Activated CD8-positive, alpha-beta T cell treated with anti-CD3 and anti-CD28 coated beads, Interleukin-2, amount 10 ng/mL, durations not matched to agents 7 days and 5 days (primary cell): ENCODE measurements at regions of chr6 and their contacts with region 1.

Region 1: DNA sequence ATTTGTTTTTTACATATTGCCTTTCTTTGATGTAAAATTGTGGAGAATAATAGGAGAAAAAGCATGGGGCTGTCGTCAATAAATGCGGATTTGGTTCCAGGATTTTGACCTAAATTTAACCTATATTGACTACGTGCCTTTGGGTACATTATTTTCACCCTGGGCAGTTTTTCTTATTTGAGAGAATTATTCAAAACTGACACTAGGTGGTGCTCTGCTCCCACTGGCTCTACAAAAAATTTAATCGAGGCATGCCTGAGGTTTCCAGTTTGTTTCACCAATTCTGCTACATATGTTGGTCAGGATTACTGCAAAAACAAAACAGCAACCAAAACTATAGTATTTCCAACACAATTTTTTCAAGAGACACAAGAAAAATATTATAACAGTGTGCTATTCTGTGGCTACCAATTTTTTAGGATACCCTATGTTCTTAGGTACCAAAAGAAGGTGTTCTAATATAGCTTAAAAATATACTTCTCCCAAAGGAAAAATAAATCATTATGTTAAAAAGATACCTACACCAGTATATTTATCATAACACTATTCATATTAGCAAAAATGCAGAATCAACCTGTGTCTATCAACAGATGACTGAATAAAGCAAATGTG is 48.6 kb upstream of the FABP7 start:
- DNase-seq: peak; percentile 35
- ATAC-seq: no peak
- H3K4me3 Mint-ChIP-seq: no peak overlapping the region
- H3K27ac Mint-ChIP-seq: no peak overlapping the region
- H3K4me1 Mint-ChIP-seq: no peaks in the 10 kb centered on the region
- H3K27me3 Mint-ChIP-seq: peaks cover 18% of the 10 kb centered on the region

Region 2: DNA sequence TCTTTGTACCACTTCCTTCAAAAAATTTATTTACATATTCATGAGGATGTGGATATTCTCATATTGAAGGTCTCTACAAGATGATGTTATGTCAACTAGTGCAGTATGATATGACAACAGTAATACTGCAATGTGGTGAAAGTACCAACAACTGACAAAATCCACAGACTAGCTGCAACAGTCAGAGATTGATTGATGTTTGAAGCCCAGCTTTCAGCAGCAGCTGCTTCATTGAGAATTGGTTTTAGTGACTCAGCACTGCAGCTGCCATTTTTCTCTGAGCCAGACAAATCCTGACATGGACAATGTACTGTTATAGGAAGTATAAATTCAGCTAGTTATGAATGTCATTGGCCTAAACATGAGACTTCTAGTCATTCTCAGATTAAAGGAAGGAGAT is 66.9 kb before region 1 on chr6:
- CTCF ChIA-PET with region 1: no interaction called
- POLR2A ChIA-PET with region 1: no interaction called
- DNase-seq: no peak
- ATAC-seq: no peak
- H3K4me3 Mint-ChIP-seq: no peak overlapping the region
- H3K27ac Mint-ChIP-seq: no peak overlapping the region
- H3K4me1 Mint-ChIP-seq: no peaks in the 10 kb centered on the region
- H3K27me3 Mint-ChIP-seq: peaks cover 2% of the 10 kb centered on the region

Region 3: GRCh38 chr6:122692131-122692598 is 38.7 kb before region 1 on chr6:
- CTCF ChIA-PET with region 1: no interaction called
- POLR2A ChIA-PET with region 1: no interaction called
- DNase-seq: no peak
- ATAC-seq: no peak
- H3K4me3 Mint-ChIP-seq: no peak overlapping the region
- H3K27ac Mint-ChIP-seq: no peak overlapping the region
- H3K4me1 Mint-ChIP-seq: no peaks in the 10 kb centered on the region
- H3K27me3 Mint-ChIP-seq: no peaks in the 10 kb centered on the region

Region 4: GRCh38 chr6:122751326-122751725 is 20.4 kb after region 1 on chr6:
- CTCF ChIA-PET with region 1: interaction called, 14 read pairs
- POLR2A ChIA-PET with region 1: no interaction called
- DNase-seq: no peak
- ATAC-seq: peak; percentile 86
- H3K4me3 Mint-ChIP-seq: no peak overlapping the region
- H3K27ac Mint-ChIP-seq: peak overlapping the region; percentile 70
- H3K4me1 Mint-ChIP-seq: peaks cover 42% of the 10 kb centered on the region
- H3K27me3 Mint-ChIP-seq: no peaks in the 10 kb centered on the region

Region 5: GRCh38 chr6:122825158-122825557 is 94.3 kb after region 1 on chr6:
- CTCF ChIA-PET with region 1: no interaction called
- POLR2A ChIA-PET with region 1: no interaction called
- DNase-seq: no peak
- ATAC-seq: no peak
- H3K4me3 Mint-ChIP-seq: no peak overlapping the region
- H3K27ac Mint-ChIP-seq: no peak overlapping the region
- H3K4me1 Mint-ChIP-seq: no peaks in the 10 kb centered on the region
- H3K27me3 Mint-ChIP-seq: peaks cover 7% of the 10 kb centered on the region

Region 6: DNA sequence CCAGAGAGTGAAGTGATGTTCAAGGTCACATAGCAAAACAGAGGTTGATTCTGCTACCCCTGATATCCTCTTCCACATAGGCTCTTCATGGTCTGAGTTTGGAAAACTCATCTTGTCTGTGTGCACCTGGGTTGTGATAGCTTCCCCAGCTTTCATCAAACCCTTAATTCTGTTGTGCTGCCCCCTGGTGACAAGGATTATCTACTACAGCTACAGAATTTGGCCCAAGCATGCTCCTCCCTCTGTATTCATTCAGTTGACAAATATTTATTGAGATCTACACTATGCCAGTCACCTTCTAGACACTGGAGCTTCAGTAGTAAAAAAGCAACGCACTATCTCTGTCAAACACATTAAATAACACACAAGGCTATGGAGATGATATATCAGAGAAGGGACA is 108.6 kb after region 1 on chr6:
- CTCF ChIA-PET with region 1: interaction called, 34 read pairs
- POLR2A ChIA-PET with region 1: interaction called, 4 read pairs
- DNase-seq: peak; percentile 70
- ATAC-seq: peak; percentile 60
- H3K4me3 Mint-ChIP-seq: no peak overlapping the region
- H3K27ac Mint-ChIP-seq: no peak overlapping the region
- H3K4me1 Mint-ChIP-seq: no peaks in the 10 kb centered on the region
- H3K27me3 Mint-ChIP-seq: peaks cover 5% of the 10 kb centered on the region